Cardiac septum (tissue), 1 donor: ENCODE measurements at regions of chr4 and their contacts with region 1.

Region 1: DNA sequence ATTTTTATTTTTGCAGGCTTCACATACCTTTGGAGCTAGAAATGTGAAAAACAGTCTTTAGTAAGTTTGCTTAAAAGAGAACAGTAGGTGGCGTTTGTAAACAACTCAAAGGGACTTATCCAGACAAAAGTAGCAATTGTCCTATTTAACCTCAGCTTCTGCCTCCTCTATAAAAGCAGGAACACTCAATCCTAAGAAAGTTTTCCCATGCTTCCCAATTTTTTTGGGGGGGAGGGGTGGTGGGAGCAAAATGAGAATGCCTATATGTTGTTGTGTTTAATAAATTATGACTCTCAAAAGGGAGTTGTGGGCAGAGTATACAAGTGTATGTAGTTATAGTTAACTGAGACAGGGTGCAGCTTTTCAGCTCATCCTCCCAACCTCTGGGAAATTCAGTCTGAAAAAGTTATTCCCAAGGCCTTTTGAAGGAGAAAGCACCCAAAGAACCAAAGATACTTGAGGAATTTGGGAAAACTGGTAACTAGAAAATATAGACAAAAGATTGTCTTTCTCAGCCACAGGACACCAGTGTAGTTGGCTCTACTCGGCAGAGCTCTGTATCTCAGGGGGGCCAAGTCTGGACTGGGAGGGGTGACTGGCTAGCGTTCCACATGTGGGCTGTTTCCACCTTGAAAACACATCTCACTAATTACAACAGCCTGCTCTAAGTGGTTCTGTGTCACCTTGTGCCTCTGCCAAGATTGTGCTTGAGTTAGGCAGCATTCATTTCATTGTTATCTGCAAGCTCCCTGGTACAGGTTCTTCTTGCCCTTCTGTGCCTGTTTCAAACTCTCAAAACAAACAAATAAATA is 2.8 kb downstream of the SFRP2 start:
- DNase-seq: no peak

Region 2: DNA sequence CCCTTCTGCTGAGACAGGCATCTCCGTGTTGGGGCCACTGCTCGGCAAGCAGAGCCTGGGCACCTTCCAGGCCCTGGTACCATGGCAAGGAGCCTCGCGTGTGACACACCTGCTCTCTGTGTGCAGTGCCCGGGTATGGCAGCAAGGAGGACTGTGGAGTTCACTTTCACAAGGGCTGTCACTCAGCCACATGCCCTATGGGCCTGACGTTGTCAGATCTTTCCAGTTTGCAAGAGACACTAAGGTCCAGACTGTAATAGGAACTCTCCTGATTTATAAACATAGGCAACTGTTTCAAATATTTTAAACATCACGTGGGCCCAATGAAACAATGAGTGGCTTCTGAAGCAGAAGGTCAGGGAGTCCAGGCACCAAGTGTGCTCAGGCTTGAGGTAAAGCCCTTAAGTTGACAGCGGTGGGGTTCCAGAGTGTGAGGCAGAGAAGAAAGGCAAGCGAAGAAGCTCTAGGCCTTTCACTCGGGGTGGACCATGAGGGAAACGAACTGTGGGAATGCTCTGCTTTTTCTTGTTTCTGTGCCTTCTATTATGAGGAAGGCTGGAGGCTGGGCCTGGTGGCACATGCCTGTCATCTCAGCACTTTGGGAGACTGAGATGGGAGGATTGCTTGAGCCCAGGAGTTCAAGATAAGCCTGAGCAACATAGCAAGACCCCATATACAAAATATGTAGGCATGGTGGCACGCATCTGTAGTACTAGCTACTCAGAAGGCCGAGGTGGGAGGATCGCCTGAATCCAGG is 690.5 kb before region 1 on chr4:
- intact Hi-C with region 1: no loop called
- DNase-seq: no peak

Region 3: DNA sequence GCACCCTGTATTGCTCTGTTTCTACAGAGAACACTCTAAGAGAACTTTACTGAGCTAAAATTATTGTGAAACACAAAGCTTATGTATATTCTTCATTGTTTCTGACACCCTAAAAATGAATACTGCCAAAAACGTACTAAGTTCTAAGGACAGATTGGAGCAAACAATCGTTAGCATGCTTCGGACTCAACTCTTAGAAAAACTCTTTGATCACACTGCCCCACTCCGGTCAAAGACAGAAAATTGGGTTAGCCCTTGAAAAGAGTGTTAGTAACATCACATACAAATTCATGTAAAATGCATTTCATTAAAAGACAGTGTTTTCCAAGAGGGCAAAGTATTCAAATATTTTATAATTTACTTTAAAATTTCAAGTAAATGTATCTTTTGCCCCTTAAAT is 528.1 kb after region 1 on chr4:
- intact Hi-C with region 1: loop called (anchors 5 kb)
- DNase-seq: no peak